Heart right ventricle (tissue), 16 donors: ENCODE measurements at regions of chr12 and their contacts with region 1.

Region 1: DNA sequence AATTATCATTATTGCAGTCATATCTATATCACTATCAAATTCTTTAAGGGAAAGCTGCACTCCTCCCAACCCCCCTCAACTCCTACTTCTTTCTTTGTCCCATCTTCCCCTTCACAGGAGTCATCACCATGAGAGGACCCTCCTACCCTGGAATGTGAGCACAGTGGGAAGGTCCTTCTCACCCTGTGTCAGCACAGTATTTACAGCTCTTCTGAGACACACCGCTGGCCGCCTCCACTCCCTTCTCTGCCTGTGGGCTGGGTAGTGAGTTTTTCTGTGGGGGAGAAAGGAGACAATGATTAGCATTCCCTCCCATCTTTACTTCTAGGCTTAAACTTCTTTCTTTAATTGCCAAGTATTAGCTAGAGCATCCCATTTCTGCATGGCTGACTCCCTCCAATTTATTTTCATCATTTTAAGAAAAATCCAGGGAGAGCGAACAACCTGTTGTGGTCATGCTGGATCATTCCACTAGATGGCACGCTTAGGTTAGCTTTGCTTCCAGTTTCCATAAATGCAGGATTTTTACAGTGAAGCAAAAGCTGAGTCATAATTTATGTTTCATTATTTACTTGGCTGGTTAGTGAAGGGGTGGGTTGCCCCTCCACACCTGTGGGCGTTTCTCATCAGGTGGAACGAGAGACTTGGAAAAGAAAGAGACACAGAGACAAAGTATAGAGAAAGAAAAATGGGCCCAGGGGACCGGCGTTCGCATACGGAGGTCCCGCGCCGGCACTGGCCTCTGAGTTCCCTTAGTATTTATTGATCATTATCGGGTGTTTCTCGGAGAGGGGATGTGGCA is 188.5 kb downstream of the ALX1 start:
- DNase-seq: peak in 1 of 2 donors; percentile 12
- ATAC-seq: peak in 5 of 8 donors; percentile 25 to 62 (median 48)
- H3K4me3 ChIP-seq: peak overlapping the region in 9 of 10 donors; percentile 22 to 58 (median 46)
- H3K27ac ChIP-seq: no peak overlapping the region
- H3K4me1 ChIP-seq: peaks cover 0 to 8% (median 4%) of the 10 kb centered on the region in 9 donors
- H3K27me3 ChIP-seq: peaks cover 0 to 37% (median 11%) of the 10 kb centered on the region in 7 donors
- CTCF ChIP-seq: peak; percentile 48 to 85 (median 75)

Region 2: DNA sequence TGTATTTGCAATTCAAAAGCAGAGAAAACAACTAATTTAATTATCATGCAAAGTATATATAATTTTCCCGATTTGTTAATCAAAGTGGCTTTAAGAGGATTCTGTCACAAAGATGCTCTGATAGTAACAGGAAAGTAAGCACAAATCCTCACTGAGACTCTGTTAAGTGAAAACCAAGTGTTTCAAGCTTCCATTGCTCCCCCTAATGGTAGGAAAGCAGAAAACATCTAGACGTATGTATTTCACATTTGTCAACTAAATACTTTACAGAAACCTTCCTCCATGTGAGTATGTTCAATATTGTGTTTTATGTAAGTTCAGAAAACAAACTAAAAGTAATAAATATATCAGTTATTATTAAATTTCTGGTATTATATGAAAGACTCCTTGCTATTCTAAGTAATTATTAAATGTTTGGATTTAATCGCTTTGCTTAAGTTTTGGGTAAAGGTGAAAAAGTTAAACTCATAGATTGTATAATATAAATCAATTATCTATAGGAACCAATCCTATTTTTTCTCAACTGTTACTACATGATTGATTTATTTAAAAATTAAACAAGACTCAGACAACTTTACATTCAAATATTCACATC is 404.0 kb after region 1 on chr12:
- intact Hi-C with region 1: loop called in 8 of 10 experiments (anchors 2 to 10 kb)
- DNase-seq: no peak
- ATAC-seq: peak in 1 of 8 donors; percentile 58
- H3K4me3 ChIP-seq: no peak overlapping the region
- H3K27ac ChIP-seq: no peak overlapping the region
- H3K4me1 ChIP-seq: no peaks in the 10 kb centered on the region
- H3K27me3 ChIP-seq: peaks cover 0 to 2% (median 0%) of the 10 kb centered on the region in 7 donors
- CTCF ChIP-seq: peak; percentile 44 to 85 (median 72)

Region 3: GRCh38 chr12:87025976-87026375 is 1557.4 kb after region 1 on chr12:
- intact Hi-C with region 1: no loop called
- DNase-seq: no peak
- ATAC-seq: no peak
- H3K4me3 ChIP-seq: no peak overlapping the region
- H3K27ac ChIP-seq: no peak overlapping the region
- H3K4me1 ChIP-seq: no peaks in the 10 kb centered on the region
- H3K27me3 ChIP-seq: no peaks in the 10 kb centered on the region
- CTCF ChIP-seq: no peak